Heart left ventricle (tissue), 16 donors: ENCODE measurements at regions of chr10 and their contacts with region 1.

Region 1: GRCh38 chr10:44310762-44311562 is 73.9 kb downstream of the CXCL12 start:
- DNase-seq: peak; percentile 88 to 93 (median 90)
- ATAC-seq: peak; percentile 84 to 99 (median 97)
- H3K4me3 ChIP-seq: peak overlapping the region in 10 of 12 donors; percentile 38 to 60 (median 50)
- H3K27ac ChIP-seq: peak overlapping the region in 6 of 12 donors; percentile 18 to 73 (median 48)
- H3K4me1 ChIP-seq: peaks cover 0 to 12% (median 10%) of the 10 kb centered on the region in 12 donors
- H3K27me3 ChIP-seq: no peaks in the 10 kb centered on the region
- CTCF ChIP-seq: peak; percentile 79 to 100 (median 98)
- POLR2A ChIP-seq: no peak

Region 2: GRCh38 chr10:43683451-43684291 is 627.3 kb before region 1 on chr10:
- intact Hi-C with region 1: loop called in 5 of 10 experiments (anchors 5 to 10 kb)
- DNase-seq: no peak
- ATAC-seq: no peak
- H3K4me3 ChIP-seq: no peak overlapping the region
- H3K27ac ChIP-seq: peak overlapping the region in 1 of 12 donors; percentile 20
- H3K4me1 ChIP-seq: peaks cover 0 to 34% (median 13%) of the 10 kb centered on the region in 12 donors
- H3K27me3 ChIP-seq: no peaks in the 10 kb centered on the region
- CTCF ChIP-seq: peak in 8 of 12 donors; percentile 16 to 43 (median 34)
- POLR2A ChIP-seq: no peak

Region 3: DNA sequence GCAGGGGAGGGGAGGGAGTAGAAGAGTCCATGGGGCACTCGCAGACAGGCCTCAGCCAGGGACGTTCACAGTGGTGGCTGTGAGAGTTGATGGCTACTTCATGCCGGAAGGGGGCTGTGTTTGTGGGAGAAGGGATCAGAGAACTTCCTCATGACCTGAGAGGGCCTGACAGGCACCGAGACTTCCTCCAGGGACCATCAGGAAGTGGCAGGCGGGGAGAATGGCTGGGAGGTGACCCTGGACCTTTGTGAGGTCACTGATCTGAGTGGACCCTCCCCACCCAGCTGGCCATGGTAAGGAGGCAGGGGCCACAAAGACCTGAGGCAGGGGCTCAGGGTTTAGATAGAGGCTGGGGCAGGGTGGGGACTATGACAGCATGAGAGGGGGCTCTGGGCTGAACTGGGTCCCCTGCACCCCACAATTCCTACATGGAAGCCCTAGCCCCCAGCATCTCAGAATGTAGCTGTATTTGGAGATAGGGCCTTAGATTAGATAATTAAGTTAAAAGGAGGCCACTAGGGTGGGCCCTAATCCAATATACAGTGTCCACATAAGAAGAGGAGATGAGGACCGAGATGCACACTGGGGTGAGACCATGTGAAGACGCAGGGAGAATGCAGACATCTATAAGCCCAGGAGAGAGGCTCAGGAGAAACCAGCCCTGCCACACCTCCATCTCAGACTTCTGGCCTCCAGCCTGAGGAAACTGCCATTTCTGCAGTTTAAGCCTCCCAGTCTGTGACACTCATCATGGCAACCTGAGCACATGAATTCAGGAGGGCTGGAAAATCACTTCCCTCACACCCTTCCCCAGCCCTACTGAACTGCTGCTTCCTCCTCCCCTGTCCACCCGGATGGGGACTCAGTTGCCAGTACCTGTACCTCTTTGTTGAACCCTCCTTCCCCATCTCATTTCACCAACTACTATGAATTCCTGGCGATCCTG is 388.4 kb before region 1 on chr10:
- intact Hi-C with region 1: loop called in 5 of 10 experiments (anchors 5 to 10 kb)
- DNase-seq: no peak
- ATAC-seq: peak in 3 of 4 donors; percentile 28 to 68 (median 31)
- H3K4me3 ChIP-seq: no peak overlapping the region
- H3K27ac ChIP-seq: no peak overlapping the region
- H3K4me1 ChIP-seq: peaks cover 0 to 15% (median 0%) of the 10 kb centered on the region in 12 donors
- H3K27me3 ChIP-seq: no peaks in the 10 kb centered on the region
- CTCF ChIP-seq: peak in 5 of 12 donors; percentile 5 to 27 (median 23)
- POLR2A ChIP-seq: no peak

Region 4: DNA sequence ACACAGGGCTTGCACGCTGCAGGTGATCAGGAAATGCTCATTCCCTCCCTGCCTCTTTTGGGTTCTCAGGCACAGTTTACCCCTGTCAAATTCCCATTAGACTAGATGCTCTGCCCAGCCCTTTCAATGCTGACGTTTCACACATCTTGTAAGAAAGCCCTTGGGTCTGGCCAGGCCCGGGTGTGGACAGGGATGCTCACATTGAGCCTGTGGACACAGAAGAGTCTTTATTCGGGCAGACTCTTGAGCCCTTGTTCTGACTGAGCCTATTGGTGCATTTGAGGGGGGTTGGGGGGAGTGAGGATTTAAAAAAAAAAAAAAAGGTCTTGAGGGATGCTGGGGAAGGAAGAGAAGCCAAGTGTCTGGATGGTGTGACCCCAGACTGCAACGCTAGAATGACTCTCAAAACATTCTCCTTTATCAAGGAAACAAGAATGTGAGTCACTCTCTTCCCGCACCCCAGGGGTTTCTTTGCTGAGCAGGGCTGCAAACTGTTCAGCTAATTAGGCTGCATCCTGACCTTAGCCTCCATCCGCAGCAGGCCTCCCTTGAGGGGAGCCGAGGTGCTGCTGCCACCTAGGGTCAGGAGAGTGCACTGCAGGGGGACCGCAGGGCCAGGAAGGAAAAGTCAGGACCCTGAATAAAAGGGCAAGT is 546.5 kb after region 1 on chr10:
- intact Hi-C with region 1: loop called in 7 of 10 experiments (anchors 2 to 10 kb)
- DNase-seq: peak; percentile 77 to 86 (median 81)
- ATAC-seq: peak; percentile 70 to 90 (median 83)
- H3K4me3 ChIP-seq: no peak overlapping the region
- H3K27ac ChIP-seq: no peak overlapping the region
- H3K4me1 ChIP-seq: peaks cover 0 to 19% (median 2%) of the 10 kb centered on the region in 12 donors
- H3K27me3 ChIP-seq: no peaks in the 10 kb centered on the region
- CTCF ChIP-seq: peak; percentile 96 to 100 (median 98)
- POLR2A ChIP-seq: no peak